ENCODE measurements at regions of chr2 and their contacts with region 1.

Region 1: GRCh38 chr2:200713003-200713703 is 98.6 kb upstream of the BZW1 start:
- DNase-seq: peak; percentile 98
- ATAC-seq: peak; percentile 99
- H3K4me3 ChIP-seq: no peak overlapping the region
- H3K27ac ChIP-seq: peak overlapping the region; percentile 82
- H3K4me1 ChIP-seq: peaks cover 7% of the 10 kb centered on the region
- H3K27me3 ChIP-seq: no peaks in the 10 kb centered on the region
- CTCF ChIP-seq: peak; percentile 75 to 94 (median 80)
- EP300 ChIP-seq: peak; percentile 85 to 94; a peak in 3 of 4 replicates
- POLR2A ChIP-seq: peak; percentile 98
- RAD21 ChIP-seq: peak; percentile 95

Region 2: GRCh38 chr2:200199005-200199404 is 514.1 kb before region 1 on chr2:
- CTCF ChIA-PET with region 1: no interaction called
- POLR2A ChIA-PET with region 1: no interaction called
- RAD21 ChIA-PET with region 1: no interaction called
- SMC1A ChIA-PET with region 1: no interaction called
- in situ Hi-C with region 1: no loop called
- intact Hi-C with region 1: no loop called
- DNase-seq: peak; percentile 44
- ATAC-seq: peak; percentile 45
- H3K4me3 ChIP-seq: no peak overlapping the region
- H3K27ac ChIP-seq: no peak overlapping the region
- H3K4me1 ChIP-seq: peaks cover 5% of the 10 kb centered on the region
- H3K27me3 ChIP-seq: no peaks in the 10 kb centered on the region
- CTCF ChIP-seq: no peak
- EP300 ChIP-seq: no peak
- POLR2A ChIP-seq: no peak
- RAD21 ChIP-seq: no peak

Region 3: DNA sequence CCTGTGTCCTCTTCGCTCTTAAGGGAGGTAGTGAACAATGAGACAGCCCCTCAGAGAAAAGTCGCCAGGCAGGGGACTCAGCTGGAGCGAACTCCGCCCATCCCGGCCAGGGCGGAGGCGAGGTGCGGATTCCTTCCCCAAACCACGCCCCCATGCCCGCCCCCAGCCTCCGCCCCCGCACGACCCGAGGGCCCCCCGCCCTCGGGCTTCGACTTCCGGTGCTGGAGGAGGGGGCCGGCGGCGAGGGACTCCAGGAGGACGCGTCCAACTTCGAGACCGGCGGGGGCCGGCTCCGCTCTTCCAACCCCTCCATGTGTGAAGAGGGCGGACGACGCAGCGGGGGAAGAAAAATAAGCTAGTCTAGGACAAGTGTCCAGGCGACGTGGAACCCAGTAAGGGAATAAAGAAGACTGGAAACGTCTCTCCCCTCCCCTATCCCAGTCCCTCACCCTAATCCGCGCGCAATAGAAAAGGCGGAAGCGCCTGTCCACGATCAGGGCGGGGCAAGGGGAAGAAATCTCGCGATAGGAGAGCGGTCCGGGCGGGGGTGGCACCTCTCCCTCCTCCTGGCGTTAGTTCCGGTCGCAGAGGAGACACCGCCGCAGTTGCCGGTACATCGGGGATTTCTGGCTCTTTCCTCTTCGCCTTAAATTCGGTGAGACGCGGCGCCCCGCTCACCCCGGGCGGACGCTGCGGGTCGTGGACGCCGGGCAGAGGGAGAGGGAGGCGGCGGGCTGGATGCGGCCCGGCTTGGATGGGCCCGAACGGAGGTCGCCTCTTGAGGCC is 98.4 kb after region 1 on chr2 and contains the start of gene BZW1:
- CTCF ChIA-PET with region 1: interaction called, 7 read pairs
- POLR2A ChIA-PET with region 1: interaction called, 5 read pairs
- RAD21 ChIA-PET with region 1: interaction called, 3 read pairs
- SMC1A ChIA-PET with region 1: interaction called, 11 read pairs
- in situ Hi-C with region 1: loop called (anchors 5 kb)
- intact Hi-C with region 1: loop called (anchors 1 kb)
- DNase-seq: peak; percentile 88
- ATAC-seq: peak; percentile 86
- H3K4me3 ChIP-seq: peak within 1 kb of the TSS; percentile 88
- H3K27ac ChIP-seq: peak within 1 kb of the TSS; percentile 100
- H3K4me1 ChIP-seq: peaks cover 19% of the 10 kb centered on the region
- H3K27me3 ChIP-seq: no peaks in the 10 kb centered on the region
- CTCF ChIP-seq: no peak
- EP300 ChIP-seq: 0 out of 4 replicates have a peak, but pooled peaks of 1 of the 2 experiments have one; percentile 5
- POLR2A ChIP-seq: peak; percentile 90
- RAD21 ChIP-seq: no peak
- polyA plus RNA-seq, gene BZW1: 200 to 317 TPM

Region 4: GRCh38 chr2:200888704-200889625 is 175.8 kb after region 1 on chr2 and contains the starts of genes NIF3L1 and PPIL3:
- CTCF ChIA-PET with region 1: interaction called, 4 read pairs
- POLR2A ChIA-PET with region 1: interaction called, 9 read pairs
- RAD21 ChIA-PET with region 1: interaction called, 4 read pairs
- SMC1A ChIA-PET with region 1: interaction called, 9 read pairs
- in situ Hi-C with region 1: no loop called
- intact Hi-C with region 1: loop called (anchors 1 kb)
- DNase-seq: peak; percentile 97
- ATAC-seq: peak; percentile 92
- H3K4me3 ChIP-seq: peak within 1 kb of the TSS; percentile 84
- H3K27ac ChIP-seq: peak within 1 kb of the TSS; percentile 85
- H3K4me1 ChIP-seq: peaks cover 11% of the 10 kb centered on the region
- H3K27me3 ChIP-seq: no peaks in the 10 kb centered on the region
- CTCF ChIP-seq: no peak
- EP300 ChIP-seq: peak in 1 of 2 experiments; percentile 64; a peak in 2 of 4 replicates
- POLR2A ChIP-seq: peak; percentile 82
- RAD21 ChIP-seq: no peak
- polyA plus RNA-seq, gene NIF3L1: 58.3 to 88.2 TPM
- polyA plus RNA-seq, gene PPIL3: 71.2 to 103 TPM

Region 5: DNA sequence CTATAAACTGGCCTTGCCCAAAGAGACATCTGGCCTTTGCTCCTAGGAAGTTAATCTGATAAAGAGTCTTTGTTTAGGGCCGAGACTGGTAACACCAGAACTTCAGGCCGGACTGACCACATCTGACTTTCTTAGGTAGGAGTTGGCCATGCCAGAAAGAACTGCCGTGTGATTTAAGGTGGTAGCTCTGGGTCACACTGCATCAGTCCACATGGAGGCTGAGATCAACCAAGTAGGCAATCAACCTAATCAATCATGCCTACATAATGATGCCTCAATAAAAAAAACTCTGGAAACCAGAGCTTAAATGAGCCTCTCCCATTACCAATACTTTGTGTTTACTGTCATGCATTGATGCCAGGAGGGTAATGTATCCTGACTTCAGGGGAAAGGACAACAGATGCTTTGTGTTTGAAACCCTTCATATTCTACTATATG is 294.4 kb after region 1 on chr2:
- CTCF ChIA-PET with region 1: no interaction called
- POLR2A ChIA-PET with region 1: no interaction called
- RAD21 ChIA-PET with region 1: no interaction called
- SMC1A ChIA-PET with region 1: no interaction called
- in situ Hi-C with region 1: no loop called
- intact Hi-C with region 1: no loop called
- DNase-seq: no peak
- ATAC-seq: no peak
- H3K4me3 ChIP-seq: no peak overlapping the region
- H3K27ac ChIP-seq: no peak overlapping the region
- H3K4me1 ChIP-seq: no peaks in the 10 kb centered on the region
- H3K27me3 ChIP-seq: no peaks in the 10 kb centered on the region
- CTCF ChIP-seq: no peak
- EP300 ChIP-seq: no peak
- POLR2A ChIP-seq: no peak
- RAD21 ChIP-seq: no peak

Region 6: DNA sequence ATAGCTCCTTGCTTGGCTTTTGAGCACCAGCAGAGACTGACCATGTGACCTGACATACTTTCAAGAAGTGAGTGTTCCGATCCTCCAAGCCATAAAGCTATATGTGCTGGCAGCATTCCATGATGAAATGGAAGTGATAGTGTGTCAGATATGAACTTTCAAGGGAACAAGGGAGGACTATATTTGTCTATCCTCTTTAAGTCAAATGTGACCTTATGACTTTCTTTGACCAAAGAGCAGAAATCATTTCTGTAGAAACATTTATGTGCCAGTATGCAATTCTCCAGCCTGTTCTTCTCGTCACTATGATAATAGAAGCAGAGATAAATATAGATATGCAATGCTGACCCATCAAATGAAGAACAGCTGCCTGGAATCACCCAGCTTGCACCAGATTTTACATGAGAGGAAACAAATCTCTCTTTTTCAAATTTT is 344.0 kb after region 1 on chr2:
- CTCF ChIA-PET with region 1: no interaction called
- POLR2A ChIA-PET with region 1: no interaction called
- RAD21 ChIA-PET with region 1: no interaction called
- SMC1A ChIA-PET with region 1: no interaction called
- in situ Hi-C with region 1: loop called (anchors 10 kb)
- intact Hi-C with region 1: no loop called
- DNase-seq: no peak
- ATAC-seq: no peak
- H3K4me3 ChIP-seq: no peak overlapping the region
- H3K27ac ChIP-seq: no peak overlapping the region
- H3K4me1 ChIP-seq: no peaks in the 10 kb centered on the region
- H3K27me3 ChIP-seq: no peaks in the 10 kb centered on the region
- CTCF ChIP-seq: no peak
- EP300 ChIP-seq: no peak
- POLR2A ChIP-seq: no peak
- RAD21 ChIP-seq: no peak

Region 7: GRCh38 chr2:201164166-201164565 is 451.0 kb after region 1 on chr2:
- CTCF ChIA-PET with region 1: no interaction called
- POLR2A ChIA-PET with region 1: no interaction called
- RAD21 ChIA-PET with region 1: no interaction called
- SMC1A ChIA-PET with region 1: no interaction called
- in situ Hi-C with region 1: loop called (anchors 5 kb)
- intact Hi-C with region 1: no loop called
- DNase-seq: no peak
- ATAC-seq: no peak
- H3K4me3 ChIP-seq: no peak overlapping the region
- H3K27ac ChIP-seq: no peak overlapping the region
- H3K4me1 ChIP-seq: no peaks in the 10 kb centered on the region; the same call in 1 of the 2 replicates
- H3K27me3 ChIP-seq: no peaks in the 10 kb centered on the region
- CTCF ChIP-seq: no peak
- EP300 ChIP-seq: no peak
- POLR2A ChIP-seq: no peak
- RAD21 ChIP-seq: no peak

Measured in GM12878 (cell line).